OCI-LY7 (cell line): ENCODE measurements at regions of chr7 and their contacts with region 1.

Region 1: DNA sequence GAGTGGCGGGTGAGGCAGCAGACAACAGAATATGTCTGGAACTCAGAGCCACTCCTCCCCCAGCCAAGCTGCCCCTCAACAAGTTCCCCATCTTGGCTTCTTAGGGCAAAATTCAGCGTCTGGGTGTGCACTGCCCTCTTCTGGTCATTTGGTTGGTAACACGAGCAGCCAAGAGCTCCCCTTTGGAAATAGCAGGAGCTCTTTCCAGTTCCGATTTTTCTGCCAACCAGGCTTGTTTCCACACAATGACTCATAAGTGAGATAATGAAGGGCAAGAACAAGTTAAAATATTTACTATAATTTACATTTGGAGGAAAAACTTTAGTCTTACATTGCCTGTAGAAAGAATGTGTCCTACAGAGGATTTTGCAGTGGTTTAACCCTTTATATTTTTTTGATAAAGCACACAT is 70.5 kb downstream of the ADCYAP1R1 start:
- DNase-seq: peak; percentile 63
- H3K4me3 ChIP-seq: no peak overlapping the region
- H3K27ac ChIP-seq: no peak overlapping the region
- H3K4me1 ChIP-seq: no peaks in the 10 kb centered on the region
- CTCF ChIP-seq: peak; percentile 87

Region 2: GRCh38 chr7:30938435-30939316 is 184.0 kb before region 1 on chr7:
- CTCF ChIA-PET with region 1: interaction called, 3 read pairs
- POLR2A ChIA-PET with region 1: no interaction called
- intact Hi-C with region 1: loop called (anchors 5 kb)
- DNase-seq: peak; percentile 67
- H3K4me3 ChIP-seq: no peak overlapping the region
- H3K27ac ChIP-seq: no peak overlapping the region
- H3K4me1 ChIP-seq: no peaks in the 10 kb centered on the region
- CTCF ChIP-seq: peak; percentile 87

Region 3: GRCh38 chr7:30983042-30983913 is 139.4 kb before region 1 on chr7:
- CTCF ChIA-PET with region 1: interaction called, 31 read pairs
- POLR2A ChIA-PET with region 1: interaction called, 3 read pairs
- intact Hi-C with region 1: loop called (anchors 1 kb)
- DNase-seq: peak; percentile 75
- H3K4me3 ChIP-seq: no peak overlapping the region
- H3K27ac ChIP-seq: no peak overlapping the region
- H3K4me1 ChIP-seq: peaks cover 21% of the 10 kb centered on the region
- CTCF ChIP-seq: peak; percentile 86